ENCODE measurements at regions of chr1 and their contacts with region 1.

Region 1: GRCh38 chr1:35930593-35931445 is at the start of gene AGO3:
- DNase-seq: peak; percentile 93
- ATAC-seq: peak; percentile 92
- H3K4me3 Mint-ChIP-seq: peak within 1 kb of the TSS; percentile 92
- H3K27ac Mint-ChIP-seq: peak within 1 kb of the TSS; percentile 95
- H3K4me1 Mint-ChIP-seq: peaks cover 29% of the 10 kb centered on the region
- H3K27me3 Mint-ChIP-seq: no peaks in the 10 kb centered on the region
- total RNA-seq, gene AGO3: 26.5 to 34.0 TPM

Region 2: GRCh38 chr1:35825255-35825654 is 105.6 kb before region 1 on chr1:
- POLR2A ChIA-PET with region 1: no interaction called
- DNase-seq: no peak
- ATAC-seq: no peak
- H3K4me3 Mint-ChIP-seq: no peak overlapping the region
- H3K27ac Mint-ChIP-seq: no peak overlapping the region
- H3K4me1 Mint-ChIP-seq: peaks cover 2% of the 10 kb centered on the region
- H3K27me3 Mint-ChIP-seq: peaks cover 2% of the 10 kb centered on the region

Region 3: DNA sequence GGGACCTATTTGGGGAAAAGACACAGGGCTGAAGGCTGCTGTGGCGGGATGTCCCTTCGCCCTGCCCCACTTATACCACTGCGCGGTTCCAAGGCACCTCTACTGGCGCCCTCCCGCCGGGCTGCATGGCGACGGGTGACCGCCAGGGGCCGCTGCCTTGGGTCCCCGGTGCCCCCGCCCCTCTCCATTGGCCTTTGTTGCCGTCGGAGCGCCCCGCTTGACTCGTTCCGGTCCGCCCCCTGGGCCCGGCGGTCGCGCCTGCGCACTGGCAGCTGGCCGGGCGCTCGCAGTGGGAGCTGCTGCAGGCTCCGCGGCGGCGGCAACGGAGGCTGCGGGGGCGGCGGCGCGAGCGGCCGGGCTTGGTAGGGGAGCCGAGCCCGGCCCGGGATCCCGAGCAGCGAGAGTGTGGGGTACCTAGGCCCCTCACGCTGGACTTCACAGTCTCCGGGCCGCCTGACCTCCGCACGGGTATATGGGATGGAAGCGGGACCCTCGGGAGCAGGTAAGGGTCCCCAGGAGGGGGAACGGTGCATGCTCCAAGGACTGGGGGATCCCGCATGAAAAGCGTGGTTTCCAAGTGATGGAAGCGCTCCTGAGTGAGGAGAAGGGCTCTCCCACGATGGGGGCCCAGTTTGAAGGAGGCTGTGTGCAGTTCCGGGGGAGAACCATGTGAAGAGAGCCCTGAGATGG is 47.7 kb before region 1 on chr1 and contains the start of gene AGO1:
- POLR2A ChIA-PET with region 1: interaction called, 19 read pairs
- DNase-seq: peak; percentile 99
- ATAC-seq: peak; percentile 95
- H3K4me3 Mint-ChIP-seq: peak within 1 kb of the TSS; percentile 94
- H3K27ac Mint-ChIP-seq: peak within 1 kb of the TSS; percentile 71
- H3K4me1 Mint-ChIP-seq: peaks cover 37% of the 10 kb centered on the region
- H3K27me3 Mint-ChIP-seq: peaks cover 4% of the 10 kb centered on the region
- total RNA-seq, gene AGO1: 24.0 to 24.8 TPM

Region 4: GRCh38 chr1:35901235-35901634 is 29.6 kb before region 1 on chr1:
- POLR2A ChIA-PET with region 1: no interaction called
- DNase-seq: no peak
- ATAC-seq: no peak
- H3K4me3 Mint-ChIP-seq: no peak overlapping the region
- H3K27ac Mint-ChIP-seq: no peak overlapping the region
- H3K4me1 Mint-ChIP-seq: no peaks in the 10 kb centered on the region
- H3K27me3 Mint-ChIP-seq: no peaks in the 10 kb centered on the region

Region 5: GRCh38 chr1:35945327-35945726 is 14.5 kb after region 1 on chr1:
- POLR2A ChIA-PET with region 1: interaction called, 27 read pairs
- DNase-seq: no peak
- ATAC-seq: no peak
- H3K4me3 Mint-ChIP-seq: no peak overlapping the region
- H3K27ac Mint-ChIP-seq: no peak overlapping the region
- H3K4me1 Mint-ChIP-seq: peaks cover 33% of the 10 kb centered on the region
- H3K27me3 Mint-ChIP-seq: no peaks in the 10 kb centered on the region